CD4-positive, alpha-beta T cell (primary cell): ENCODE measurements at regions of chr4 and their contacts with region 1.

Region 1: GRCh38 chr4:2418650-2419571 is at the start of gene CFAP99:
- DNase-seq: peak; percentile 98 to 99 (median 99)
- ATAC-seq: peak; percentile 86
- H3K4me3 ChIP-seq: peak within 1 kb of the TSS; percentile 75
- H3K4me3 Mint-ChIP-seq: peak within 1 kb of the TSS; percentile 91
- H3K27ac ChIP-seq: peak within 1 kb of the TSS; percentile 43 to 88
- H3K27ac Mint-ChIP-seq: peak within 1 kb of the TSS; percentile 80
- H3K4me1 ChIP-seq: peaks cover 49% of the 10 kb centered on the region
- H3K4me1 Mint-ChIP-seq: peaks cover 39% of the 10 kb centered on the region
- H3K27me3 ChIP-seq: peaks cover 9 to 11% of the 10 kb centered on the region in 2 experiments
- H3K27me3 Mint-ChIP-seq: peaks cover 31% of the 10 kb centered on the region
- CTCF ChIP-seq: peak; percentile 52
- total RNA-seq, gene CFAP99: 0.17 TPM in 1 of 2 experiments, not detected in the other

Region 2: GRCh38 chr4:2008875-2009703 is 409.8 kb before region 1 on chr4 and contains the start of gene NELFA:
- CTCF ChIA-PET with region 1: interaction called, 3 read pairs
- POLR2A ChIA-PET with region 1: no interaction called
- intact Hi-C with region 1: loop called in 1 of 2 experiments (anchors 2 kb)
- DNase-seq: peak; percentile 93 to 98 (median 95)
- ATAC-seq: peak; percentile 79
- H3K4me3 ChIP-seq: peak within 1 kb of the TSS; percentile 87
- H3K4me3 Mint-ChIP-seq: peak within 1 kb of the TSS; percentile 98
- H3K27ac ChIP-seq: peak within 1 kb of the TSS; percentile 97 to 99
- H3K27ac Mint-ChIP-seq: peak within 1 kb of the TSS; percentile 95
- H3K4me1 ChIP-seq: peaks cover 31% of the 10 kb centered on the region
- H3K4me1 Mint-ChIP-seq: peaks cover 39% of the 10 kb centered on the region
- H3K27me3 ChIP-seq: no peaks in the 10 kb centered on the region
- H3K27me3 Mint-ChIP-seq: no peaks in the 10 kb centered on the region
- CTCF ChIP-seq: no peak
- total RNA-seq, gene NELFA: 39.9 to 40.1 TPM

Region 3: GRCh38 chr4:2281575-2282343 is 137.2 kb before region 1 on chr4:
- CTCF ChIA-PET with region 1: interaction called, 21 read pairs
- POLR2A ChIA-PET with region 1: interaction called, 10 read pairs
- intact Hi-C with region 1: loop called (anchors 1 to 5 kb)
- DNase-seq: peak; percentile 74 to 97 (median 84)
- ATAC-seq: peak; percentile 87
- H3K4me3 ChIP-seq: peak overlapping the region; percentile 13
- H3K4me3 Mint-ChIP-seq: peak overlapping the region; percentile 78
- H3K27ac ChIP-seq: peak overlapping the region; percentile 87 to 96
- H3K27ac Mint-ChIP-seq: peak overlapping the region; percentile 95
- H3K4me1 ChIP-seq: peaks cover 57% of the 10 kb centered on the region
- H3K4me1 Mint-ChIP-seq: peaks cover 38% of the 10 kb centered on the region
- H3K27me3 ChIP-seq: no peaks in the 10 kb centered on the region
- H3K27me3 Mint-ChIP-seq: no peaks in the 10 kb centered on the region
- CTCF ChIP-seq: peak; percentile 25

Region 4: GRCh38 chr4:2441393-2442174 is 22.7 kb after region 1 on chr4:
- CTCF ChIA-PET with region 1: interaction called, 17 read pairs
- POLR2A ChIA-PET with region 1: no interaction called
- intact Hi-C with region 1: no loop called
- DNase-seq: peak; percentile 52 to 87 (median 67)
- ATAC-seq: peak; percentile 99
- H3K4me3 ChIP-seq: no peak overlapping the region
- H3K4me3 Mint-ChIP-seq: no peak overlapping the region
- H3K27ac ChIP-seq: no peak overlapping the region
- H3K27ac Mint-ChIP-seq: no peak overlapping the region
- H3K4me1 ChIP-seq: peaks cover 9% of the 10 kb centered on the region
- H3K4me1 Mint-ChIP-seq: no peaks in the 10 kb centered on the region
- H3K27me3 ChIP-seq: no peaks in the 10 kb centered on the region
- H3K27me3 Mint-ChIP-seq: no peaks in the 10 kb centered on the region
- CTCF ChIP-seq: peak; percentile 69

Region 5: GRCh38 chr4:2536193-2537010 is 117.5 kb after region 1 on chr4 and contains the start of gene FAM193A:
- CTCF ChIA-PET with region 1: no interaction called
- POLR2A ChIA-PET with region 1: interaction called, 4 read pairs
- intact Hi-C with region 1: loop called in 1 of 2 experiments (anchors 1 kb)
- DNase-seq: peak; percentile 96 to 100 (median 98)
- ATAC-seq: peak; percentile 95
- H3K4me3 ChIP-seq: peak within 1 kb of the TSS; percentile 61
- H3K4me3 Mint-ChIP-seq: peak within 1 kb of the TSS; percentile 95
- H3K27ac ChIP-seq: peak within 1 kb of the TSS; percentile 26 to 70
- H3K27ac Mint-ChIP-seq: peak within 1 kb of the TSS; percentile 89
- H3K4me1 ChIP-seq: peaks cover 43% of the 10 kb centered on the region
- H3K4me1 Mint-ChIP-seq: peaks cover 20% of the 10 kb centered on the region
- H3K27me3 ChIP-seq: no peaks in the 10 kb centered on the region
- H3K27me3 Mint-ChIP-seq: no peaks in the 10 kb centered on the region
- CTCF ChIP-seq: no peak
- total RNA-seq, gene FAM193A: 28.4 to 30.0 TPM

Region 6: GRCh38 chr4:2811830-2812611 is 393.1 kb after region 1 on chr4:
- CTCF ChIA-PET with region 1: no interaction called
- POLR2A ChIA-PET with region 1: no interaction called
- intact Hi-C with region 1: no loop called
- DNase-seq: peak in 12 of 14 experiments; percentile 34 to 85 (median 54)
- ATAC-seq: peak; percentile 80
- H3K4me3 ChIP-seq: peak overlapping the region; percentile 77
- H3K4me3 Mint-ChIP-seq: peak overlapping the region; percentile 99
- H3K27ac ChIP-seq: peak overlapping the region; percentile 80 to 83
- H3K27ac Mint-ChIP-seq: peak overlapping the region; percentile 95
- H3K4me1 ChIP-seq: peaks cover 68% of the 10 kb centered on the region
- H3K4me1 Mint-ChIP-seq: peaks cover 56% of the 10 kb centered on the region
- H3K27me3 ChIP-seq: no peaks in the 10 kb centered on the region
- H3K27me3 Mint-ChIP-seq: no peaks in the 10 kb centered on the region
- CTCF ChIP-seq: no peak